BJ (cell line): ENCODE measurements at regions of chr20 and their contacts with region 1.

Region 1: DNA sequence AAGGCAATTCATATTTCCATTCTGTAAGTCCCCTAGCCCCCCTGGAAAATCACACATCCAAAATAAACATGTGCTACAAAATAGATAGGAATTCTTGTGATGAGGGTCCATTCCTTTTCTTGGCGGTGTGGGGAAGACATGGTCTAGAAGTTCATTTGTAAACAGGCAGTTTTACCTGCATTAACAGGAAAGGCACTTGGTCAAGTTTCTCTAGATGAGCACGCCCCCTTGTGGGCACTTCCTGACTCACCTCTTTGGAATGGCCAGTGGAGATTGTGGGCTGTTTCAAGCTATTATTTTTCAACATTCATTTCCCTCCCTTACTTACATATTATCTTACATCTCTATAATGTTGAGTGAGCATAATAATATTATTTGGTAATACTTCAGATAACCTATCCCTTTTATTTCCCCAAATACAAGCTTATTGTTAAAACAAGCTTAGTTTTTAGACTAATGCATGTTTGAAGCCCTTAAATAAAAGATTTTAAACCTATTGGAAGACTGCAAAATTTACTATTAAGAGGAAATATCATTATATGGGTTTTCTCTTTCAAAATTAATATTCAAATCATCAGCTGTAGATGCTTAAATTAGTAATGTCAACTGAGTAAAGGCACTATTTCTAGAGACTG is 92.1 kb downstream of the TASP1 start:
- DNase-seq: peak; percentile 9
- H3K4me3 ChIP-seq: no peak overlapping the region
- H3K27me3 ChIP-seq: no peaks in the 10 kb centered on the region
- CTCF ChIP-seq: peak; percentile 68

Region 2: DNA sequence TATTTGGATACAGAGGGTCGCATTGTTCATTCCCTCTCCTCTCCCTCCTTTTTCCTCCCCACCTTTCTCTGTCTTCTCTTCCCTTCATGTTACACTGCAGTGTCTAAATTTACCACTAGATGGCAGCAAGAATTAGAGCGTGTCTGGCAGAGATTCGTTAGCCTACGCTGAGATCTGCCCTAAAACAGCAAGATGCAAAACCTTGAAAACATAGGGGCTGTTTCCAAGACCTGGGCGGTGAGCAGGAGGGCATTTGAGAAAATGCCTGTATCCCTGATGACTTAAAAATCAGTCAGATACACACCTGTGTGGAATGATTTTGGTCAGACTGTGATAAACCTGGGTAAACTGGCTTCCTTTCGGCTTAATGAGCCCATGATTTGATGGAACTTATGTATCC is 427.0 kb before region 1 on chr20:
- CTCF ChIA-PET with region 1: interaction called, 19 read pairs
- POLR2A ChIA-PET with region 1: no interaction called
- DNase-seq: no peak
- H3K4me3 ChIP-seq: no peak overlapping the region
- H3K27me3 ChIP-seq: peaks cover 3% of the 10 kb centered on the region
- CTCF ChIP-seq: peak; percentile 90

Region 3: GRCh38 chr20:13325033-13325432 is 221.6 kb before region 1 on chr20:
- CTCF ChIA-PET with region 1: interaction called, 92 read pairs
- POLR2A ChIA-PET with region 1: interaction called, 5 read pairs
- DNase-seq: no peak
- H3K4me3 ChIP-seq: no peak overlapping the region
- H3K27me3 ChIP-seq: peaks cover 3% of the 10 kb centered on the region
- CTCF ChIP-seq: peak; percentile 76

Region 4: GRCh38 chr20:13396022-13396421 is 150.6 kb before region 1 on chr20:
- CTCF ChIA-PET with region 1: interaction called, 11 read pairs
- POLR2A ChIA-PET with region 1: no interaction called
- DNase-seq: peak; percentile 95
- H3K4me3 ChIP-seq: no peak overlapping the region
- H3K27me3 ChIP-seq: no peaks in the 10 kb centered on the region
- CTCF ChIP-seq: no peak

Region 5: DNA sequence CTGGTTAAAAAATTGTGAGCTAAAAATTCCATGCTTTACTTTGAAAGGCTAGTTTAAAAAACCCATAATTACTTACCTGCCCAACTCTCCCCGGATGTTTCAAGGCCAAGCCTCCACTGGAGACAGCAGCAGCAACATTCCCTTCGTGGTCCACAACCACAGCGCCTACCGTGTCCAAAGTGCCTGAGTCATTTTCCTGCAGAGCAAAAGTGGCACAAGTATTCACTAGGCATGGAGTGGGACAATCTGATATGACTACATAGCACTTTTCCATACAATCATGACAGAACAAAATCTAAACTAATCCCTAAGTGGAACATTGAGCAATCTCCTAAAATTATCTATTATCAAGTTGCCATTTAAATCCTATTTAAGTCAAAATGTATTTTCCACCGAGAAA is 12.7 kb before region 1 on chr20:
- CTCF ChIA-PET with region 1: interaction called, 28 read pairs
- POLR2A ChIA-PET with region 1: no interaction called
- DNase-seq: no peak
- H3K4me3 ChIP-seq: no peak overlapping the region
- H3K27me3 ChIP-seq: no peaks in the 10 kb centered on the region
- CTCF ChIP-seq: no peak